ENCODE measurements at regions of chr3 and their contacts with region 1.

Region 1: DNA sequence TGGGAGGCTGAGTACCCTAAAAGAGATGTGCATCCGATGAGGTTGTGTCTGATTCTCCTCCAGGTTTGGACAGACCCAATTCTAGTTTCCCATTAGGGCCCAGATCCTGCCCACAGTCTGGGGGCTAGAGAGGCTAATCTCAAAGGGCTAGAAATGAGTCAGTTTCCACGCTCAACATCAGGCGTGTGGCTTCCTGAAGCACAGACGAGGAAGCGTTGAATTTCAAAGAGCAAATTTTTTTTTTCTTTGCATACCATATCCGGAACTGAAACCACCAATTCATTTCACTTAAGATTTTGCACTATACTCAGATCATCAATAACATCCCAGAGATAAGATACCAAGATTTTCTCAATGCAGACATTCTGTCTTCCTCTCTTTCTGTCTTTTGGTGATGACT is 173.8 kb upstream of the BCL6 start:
- DNase-seq: peak; percentile 52 to 78 (median 66)
- H3K4me3 ChIP-seq: peak overlapping the region; percentile 34 to 39
- H3K4me3 Mint-ChIP-seq: peak overlapping the region; percentile 81 to 88 (median 83)
- H3K27ac ChIP-seq: peak overlapping the region; percentile 46
- H3K27ac Mint-ChIP-seq: peak overlapping the region; percentile 89 to 94 (median 91)
- H3K4me1 ChIP-seq: peaks cover 38% of the 10 kb centered on the region
- H3K4me1 Mint-ChIP-seq: peaks cover 42 to 59% (median 50%) of the 10 kb centered on the region in 4 donors
- H3K27me3 ChIP-seq: no peaks in the 10 kb centered on the region
- H3K27me3 Mint-ChIP-seq: no peaks in the 10 kb centered on the region

Region 2: DNA sequence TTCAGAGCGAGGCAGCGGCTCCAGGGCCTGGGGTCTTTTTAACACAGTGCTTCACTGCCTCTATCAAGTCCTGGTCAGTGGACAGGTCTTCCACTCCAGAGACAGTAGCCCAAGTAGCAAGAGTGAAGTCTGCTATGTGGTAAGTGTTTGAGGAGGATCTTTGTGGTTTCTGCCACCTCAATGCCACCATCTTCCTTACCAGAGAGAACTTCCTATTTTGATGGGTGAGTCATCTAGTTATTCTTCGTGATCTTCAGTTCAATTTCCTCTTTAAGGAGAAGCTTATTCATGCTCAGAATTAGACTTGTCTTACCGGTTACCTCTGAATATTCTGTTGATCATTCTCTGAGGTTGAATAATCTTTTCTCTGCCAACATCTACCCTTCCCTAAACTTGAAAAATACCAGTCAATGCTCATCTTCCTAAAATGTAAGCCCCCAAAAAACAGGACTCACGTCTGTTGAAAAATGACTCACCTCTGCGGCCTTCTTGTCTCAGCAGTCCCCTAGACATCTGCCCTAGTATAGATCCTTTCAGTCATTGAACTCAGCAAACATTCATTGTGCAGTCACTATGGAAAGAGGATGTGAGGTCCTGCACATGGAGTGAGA is 141.6 kb before region 1 on chr3:
- CTCF ChIA-PET with region 1: no interaction called
- POLR2A ChIA-PET with region 1: no interaction called
- intact Hi-C with region 1: loop called (anchors 1 kb)
- DNase-seq: peak; percentile 52 to 74 (median 61)
- H3K4me3 ChIP-seq: peak overlapping the region in 1 of 2 donors; percentile 17
- H3K4me3 Mint-ChIP-seq: peak overlapping the region in 7 of 8 donors; percentile 0 to 81 (median 70)
- H3K27ac ChIP-seq: peak overlapping the region; percentile 37
- H3K27ac Mint-ChIP-seq: peak overlapping the region; percentile 84 to 97 (median 90)
- H3K4me1 ChIP-seq: peaks cover 27% of the 10 kb centered on the region
- H3K4me1 Mint-ChIP-seq: peaks cover 24 to 35% (median 26%) of the 10 kb centered on the region in 4 donors
- H3K27me3 ChIP-seq: no peaks in the 10 kb centered on the region
- H3K27me3 Mint-ChIP-seq: peaks cover 0 to 2% of the 10 kb centered on the region in 2 donors

Region 3: DNA sequence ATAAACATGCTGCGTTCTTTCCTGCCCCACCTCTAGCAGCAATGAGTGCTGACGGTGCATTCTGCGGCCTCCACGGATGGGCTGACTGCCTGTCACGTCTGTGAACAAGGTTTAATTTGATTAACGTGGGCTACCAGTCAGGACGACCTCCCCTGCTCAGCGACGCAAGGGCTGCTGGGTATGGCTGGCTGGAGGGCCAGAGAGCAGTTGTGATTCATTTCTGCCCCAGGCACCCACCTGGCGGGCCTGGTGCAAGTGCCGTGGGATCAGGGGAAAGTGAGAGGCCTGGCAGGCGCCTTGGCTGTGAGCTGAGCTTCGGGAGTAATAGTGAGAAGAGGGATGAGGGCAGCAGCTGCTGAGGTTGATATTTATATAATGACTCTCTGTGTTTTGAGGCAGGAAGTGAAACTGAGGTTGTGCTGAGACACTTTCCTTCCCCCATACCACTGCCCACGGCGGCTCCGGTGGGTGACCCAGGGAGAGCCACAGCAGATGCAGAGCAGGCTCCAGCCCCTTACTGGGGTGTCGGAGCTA is 16.6 kb after region 1 on chr3:
- CTCF ChIA-PET with region 1: interaction called, 4 read pairs
- POLR2A ChIA-PET with region 1: no interaction called
- intact Hi-C with region 1: loop called (anchors 2 kb)
- DNase-seq: peak in 4 of 5 donors; percentile 16 to 37 (median 18)
- H3K4me3 ChIP-seq: peak overlapping the region in 1 of 2 donors; percentile 7
- H3K4me3 Mint-ChIP-seq: peak overlapping the region; percentile 69 to 91 (median 84)
- H3K27ac ChIP-seq: no peak overlapping the region
- H3K27ac Mint-ChIP-seq: peak overlapping the region in 6 of 7 donors; percentile 53 to 94 (median 93)
- H3K4me1 ChIP-seq: peaks cover 17% of the 10 kb centered on the region
- H3K4me1 Mint-ChIP-seq: peaks cover 21 to 25% (median 22%) of the 10 kb centered on the region in 4 donors
- H3K27me3 ChIP-seq: no peaks in the 10 kb centered on the region
- H3K27me3 Mint-ChIP-seq: no peaks in the 10 kb centered on the region

Region 4: GRCh38 chr3:187994221-187995042 is 75.4 kb after region 1 on chr3:
- CTCF ChIA-PET with region 1: no interaction called
- POLR2A ChIA-PET with region 1: interaction called, 3 read pairs
- intact Hi-C with region 1: loop called (anchors 5 kb)
- DNase-seq: peak; percentile 51 to 69 (median 60)
- H3K4me3 ChIP-seq: peak overlapping the region in 1 of 2 donors; percentile 11
- H3K4me3 Mint-ChIP-seq: peak overlapping the region in 7 of 8 donors; percentile 59 to 86 (median 76)
- H3K27ac ChIP-seq: no peak overlapping the region
- H3K27ac Mint-ChIP-seq: peak overlapping the region; percentile 72 to 94 (median 88)
- H3K4me1 ChIP-seq: peaks cover 70% of the 10 kb centered on the region
- H3K4me1 Mint-ChIP-seq: peaks cover 65 to 82% (median 72%) of the 10 kb centered on the region in 4 donors
- H3K27me3 ChIP-seq: no peaks in the 10 kb centered on the region
- H3K27me3 Mint-ChIP-seq: no peaks in the 10 kb centered on the region

Measured in CD4-positive, alpha-beta memory T cell (primary cell).